Posterior vena cava (tissue), 2 donors: ENCODE measurements at regions of chr3 and their contacts with region 1.

Region 1: DNA sequence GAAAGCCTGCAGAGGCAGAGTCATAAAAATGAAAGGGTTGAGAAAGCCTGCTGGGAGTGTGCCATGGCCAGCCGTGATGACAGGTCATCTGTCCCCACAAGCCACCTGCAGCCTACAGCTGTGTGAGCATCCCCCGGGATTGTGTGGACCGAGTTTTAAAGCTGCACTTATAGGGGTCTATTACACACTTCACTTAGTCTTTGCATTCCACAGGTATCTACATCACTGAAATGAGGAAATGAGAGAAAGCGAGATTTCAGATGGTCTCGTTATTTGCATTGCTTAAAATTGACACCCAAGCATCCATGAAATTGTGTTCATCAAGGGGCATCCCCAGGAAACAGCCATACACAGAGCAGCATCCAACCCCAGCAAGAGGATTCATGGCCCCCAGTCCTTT is 137.6 kb upstream of the TRIM42 start:
- DNase-seq: no peak

Region 2: GRCh38 chr3:140501061-140501769 is 39.0 kb before region 1 on chr3:
- intact Hi-C with region 1: loop called in 1 of 2 experiments (anchors 1 kb)
- DNase-seq: no peak

Region 3: DNA sequence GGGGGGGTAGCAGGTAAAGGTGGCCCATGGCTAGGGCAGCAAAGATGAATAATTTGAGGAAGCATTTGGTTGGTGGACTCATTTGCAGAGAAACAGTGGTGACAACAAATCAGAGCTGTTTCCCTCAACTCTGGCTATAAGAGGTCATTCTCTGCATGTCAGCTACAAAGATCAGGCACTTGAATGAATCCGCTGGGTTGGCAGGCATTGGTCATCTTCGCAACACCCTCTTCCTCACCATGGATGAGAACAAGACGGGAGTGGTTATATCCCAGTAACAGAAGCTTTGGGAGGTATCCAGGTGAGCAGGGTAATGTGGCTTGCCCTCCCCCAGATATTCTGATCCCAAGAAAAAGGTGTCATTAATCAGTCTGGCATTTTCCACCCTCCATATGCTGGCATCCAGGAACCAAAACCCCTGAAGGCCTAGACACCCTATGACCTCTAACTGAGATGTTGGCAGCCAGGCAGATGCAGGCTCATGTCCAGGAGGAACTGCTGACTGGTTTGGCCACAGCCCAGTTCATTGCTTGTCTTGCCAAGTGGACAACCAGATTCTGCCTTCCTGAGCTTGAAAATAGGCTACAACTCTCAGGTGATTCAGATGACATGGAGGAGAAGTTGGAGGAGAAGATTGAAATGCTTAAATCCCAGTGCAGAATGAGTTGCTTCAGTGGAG is 28.7 kb after region 1 on chr3:
- intact Hi-C with region 1: no loop called
- DNase-seq: no peak

Region 4: GRCh38 chr3:140816372-140817195 is 276.3 kb after region 1 on chr3:
- intact Hi-C with region 1: no loop called
- DNase-seq: no peak